Vagina (tissue), 2 donors: ENCODE measurements at regions of chr11 and their contacts with region 1.

Region 1: DNA sequence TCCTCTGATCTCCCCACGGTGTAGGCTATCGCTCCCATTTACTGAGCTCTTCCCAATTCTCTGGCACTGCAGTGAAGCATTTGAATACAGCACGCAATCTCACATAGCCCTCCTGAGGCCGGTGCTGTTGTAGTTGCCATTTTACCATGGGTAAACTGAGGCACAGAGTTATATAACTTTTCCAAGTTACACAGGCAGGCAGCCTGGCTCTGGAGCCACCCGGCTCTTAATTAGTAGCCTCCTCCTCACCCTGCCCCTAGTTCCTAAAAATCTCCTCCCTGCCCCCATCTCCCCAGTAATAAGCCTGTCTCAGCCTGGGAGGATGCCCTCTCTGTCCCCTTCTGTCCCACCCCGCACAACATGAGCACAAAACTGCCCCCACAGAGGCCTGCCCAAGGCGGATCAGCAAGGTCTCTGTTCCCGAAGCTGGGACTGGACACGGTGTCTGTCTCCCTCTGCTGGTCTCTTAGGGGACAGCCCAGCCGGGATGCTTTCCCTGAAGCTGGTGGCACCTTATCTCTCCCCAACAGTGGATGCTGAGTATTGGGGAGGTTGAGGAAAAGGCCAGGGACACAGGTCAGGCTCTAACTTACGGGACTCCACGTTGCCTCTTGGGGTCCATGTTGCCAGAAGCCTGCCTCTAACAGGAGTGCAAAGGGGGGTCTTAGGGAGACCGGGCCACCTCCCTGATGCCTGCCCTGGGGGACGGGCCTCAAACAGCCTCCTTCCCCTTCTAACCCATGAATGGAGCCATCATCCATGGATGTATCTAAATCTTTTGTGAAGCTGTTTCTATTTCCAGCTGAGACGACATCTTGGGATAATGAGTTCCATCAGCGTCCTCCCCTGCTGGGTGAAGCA is 9.1 kb upstream of the CLCF1 start:
- DNase-seq: no peak
- H3K4me3 ChIP-seq: no peak overlapping the region
- H3K27ac ChIP-seq: no peak overlapping the region
- H3K4me1 ChIP-seq: peaks cover 23% of the 10 kb centered on the region
- H3K27me3 ChIP-seq: no peaks in the 10 kb centered on the region
- CTCF ChIP-seq: peak; percentile 95 to 99 (median 98)
- POLR2A ChIP-seq: no peak

Region 2: DNA sequence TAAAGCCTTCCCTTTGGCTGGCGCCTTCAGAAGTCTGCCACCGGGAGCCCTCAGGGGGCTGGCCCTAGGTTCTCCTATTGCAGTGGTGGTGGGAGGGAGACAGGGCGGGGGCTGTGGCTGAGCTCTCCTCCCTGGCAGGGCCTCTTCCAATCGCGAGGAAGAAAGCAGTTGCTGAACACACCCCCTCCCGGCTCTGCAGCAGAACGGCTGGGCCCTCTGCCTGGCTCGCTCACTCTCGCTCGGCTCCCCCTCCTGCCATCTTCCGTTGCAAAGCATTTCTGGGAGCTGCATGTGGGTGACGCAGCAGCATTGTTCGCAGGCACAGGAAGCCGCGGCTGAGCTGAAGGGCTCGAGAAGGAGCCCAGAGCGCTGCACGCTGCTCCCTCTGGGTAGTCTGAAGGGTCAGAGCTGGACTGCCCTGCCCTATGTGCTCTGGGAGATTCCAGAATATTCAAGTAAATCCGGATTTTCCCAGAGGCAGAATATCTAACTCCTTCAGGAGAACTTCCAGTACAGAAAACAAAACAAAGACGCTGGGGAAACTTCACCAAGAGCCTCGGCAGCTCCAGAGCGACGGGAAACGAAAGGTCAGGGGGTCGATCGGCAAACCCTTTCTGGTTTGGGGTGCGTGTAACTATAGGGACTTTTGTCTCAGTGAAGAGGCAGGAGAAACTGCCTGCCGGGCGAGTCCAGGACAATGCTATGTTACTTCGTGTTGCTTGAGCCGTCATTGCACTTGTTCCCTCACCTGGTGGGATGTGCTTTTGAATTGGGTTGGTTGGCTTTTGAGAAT is 142.5 kb before region 1 on chr11:
- intact Hi-C with region 1: no loop called
- DNase-seq: peak in 1 of 2 donors; percentile 98
- H3K4me3 ChIP-seq: peak overlapping the region; percentile 68 to 73
- H3K27ac ChIP-seq: peak overlapping the region; percentile 84
- H3K4me1 ChIP-seq: peaks cover 50% of the 10 kb centered on the region
- H3K27me3 ChIP-seq: no peaks in the 10 kb centered on the region
- CTCF ChIP-seq: peak in 1 of 3 experiments; percentile 12
- POLR2A ChIP-seq: peak in 1 of 2 donors; percentile 94

Region 3: GRCh38 chr11:67345920-67346799 is 36.3 kb before region 1 on chr11:
- intact Hi-C with region 1: loop called (anchors 5 kb)
- DNase-seq: no peak
- H3K4me3 ChIP-seq: no peak overlapping the region
- H3K27ac ChIP-seq: peak overlapping the region; percentile 56
- H3K4me1 ChIP-seq: peaks cover 37% of the 10 kb centered on the region
- H3K27me3 ChIP-seq: no peaks in the 10 kb centered on the region
- CTCF ChIP-seq: peak in 1 of 3 experiments; percentile 12
- POLR2A ChIP-seq: no peak

Region 4: DNA sequence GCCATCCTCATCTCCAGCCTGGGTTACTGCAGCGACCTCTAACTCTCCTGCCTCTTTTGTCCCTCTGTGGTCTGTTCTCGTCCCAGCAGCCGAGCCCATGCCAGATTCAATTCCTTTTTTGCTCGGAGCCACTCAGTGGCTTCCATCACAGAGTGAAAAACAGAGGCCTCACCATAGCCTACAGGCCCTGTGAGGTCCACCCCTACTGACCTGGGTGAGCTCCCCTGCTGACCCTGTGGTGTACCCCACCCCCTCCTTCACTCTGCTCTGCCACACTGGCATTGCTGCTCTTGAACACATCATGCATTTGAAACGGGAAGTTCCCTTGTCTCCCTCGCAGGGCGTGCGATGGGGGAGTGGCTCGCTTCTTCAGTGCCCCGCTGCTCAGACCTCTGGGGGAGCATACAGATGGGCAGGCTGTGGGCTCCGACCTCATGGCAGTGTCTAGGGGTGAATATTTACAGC is 102.4 kb after region 1 on chr11:
- intact Hi-C with region 1: no loop called
- DNase-seq: no peak
- H3K4me3 ChIP-seq: no peak overlapping the region
- H3K27ac ChIP-seq: no peak overlapping the region
- H3K4me1 ChIP-seq: peaks cover 33% of the 10 kb centered on the region
- H3K27me3 ChIP-seq: no peaks in the 10 kb centered on the region
- CTCF ChIP-seq: no peak
- POLR2A ChIP-seq: no peak